Vagina (tissue), 2 donors: ENCODE measurements at regions of chr4 and their contacts with region 1.

Region 1: DNA sequence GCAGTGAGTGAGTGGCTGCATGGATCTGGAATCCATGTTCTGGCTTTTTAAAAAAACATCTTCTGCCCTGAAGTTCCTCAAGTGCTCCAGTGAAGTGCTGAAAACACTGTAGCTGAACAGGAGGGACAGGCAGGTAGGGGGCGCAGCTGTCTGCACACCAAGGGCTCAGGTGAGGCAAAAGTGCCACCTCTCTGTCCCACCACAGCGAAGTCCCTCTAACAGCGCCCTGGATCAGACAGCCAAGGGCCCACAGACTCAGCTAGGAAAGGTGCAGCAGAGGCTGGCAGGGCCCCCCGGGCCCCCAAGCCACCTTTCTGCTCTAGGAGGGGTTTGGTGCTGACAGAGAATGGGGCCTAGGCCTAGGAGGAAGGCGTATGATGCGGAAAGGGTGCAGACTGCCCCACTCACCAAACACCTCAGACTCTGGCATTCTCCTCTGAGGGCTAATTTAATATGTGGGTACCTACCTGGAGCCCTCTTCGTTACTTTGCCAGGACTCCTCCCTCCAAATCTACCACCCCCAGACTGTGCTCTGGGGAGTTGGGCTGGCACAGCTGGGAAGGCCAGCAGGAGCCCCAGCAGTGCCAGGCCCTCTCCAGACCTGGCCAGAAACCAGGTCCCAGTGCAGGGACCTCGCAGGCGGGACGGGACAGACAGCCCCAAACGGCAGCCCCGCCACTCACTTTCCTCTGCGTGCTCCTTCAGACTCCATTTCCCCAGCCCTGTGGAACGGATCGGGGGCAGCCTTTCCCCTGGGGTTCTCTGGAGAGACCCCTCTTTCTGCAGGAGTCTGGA is 73.7 kb downstream of the ENPP6 start:
- DNase-seq: no peak
- H3K4me3 ChIP-seq: no peak overlapping the region
- H3K27ac ChIP-seq: no peak overlapping the region
- H3K4me1 ChIP-seq: peaks cover 7% of the 10 kb centered on the region
- H3K27me3 ChIP-seq: no peaks in the 10 kb centered on the region
- CTCF ChIP-seq: no peak
- POLR2A ChIP-seq: no peak

Region 2: DNA sequence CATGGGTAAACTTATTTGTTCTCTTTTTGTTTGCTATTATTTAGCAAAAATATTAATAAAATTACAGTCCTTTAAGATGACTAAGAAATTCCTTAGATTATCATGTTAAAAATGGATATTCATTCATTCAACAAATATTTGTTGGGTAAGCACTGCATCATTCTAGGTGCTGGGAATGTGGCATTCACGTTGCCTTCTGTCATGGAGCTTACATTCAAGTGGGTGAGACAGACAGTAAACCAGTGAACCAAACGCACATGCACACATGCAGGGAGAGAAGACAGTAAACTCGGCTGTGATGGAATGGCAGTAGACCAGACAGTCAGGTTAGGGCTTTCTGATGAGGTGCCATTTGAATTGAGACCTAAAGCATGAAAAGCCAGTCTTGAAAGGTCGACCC is 147.1 kb before region 1 on chr4:
- intact Hi-C with region 1: loop called (anchors 10 kb)
- DNase-seq: no peak
- H3K4me3 ChIP-seq: no peak overlapping the region
- H3K27ac ChIP-seq: no peak overlapping the region
- H3K4me1 ChIP-seq: no peaks in the 10 kb centered on the region
- H3K27me3 ChIP-seq: no peaks in the 10 kb centered on the region
- CTCF ChIP-seq: no peak
- POLR2A ChIP-seq: no peak

Region 3: GRCh38 chr4:184267673-184268583 is 124.0 kb after region 1 on chr4:
- intact Hi-C with region 1: no loop called
- DNase-seq: peak; percentile 82
- H3K4me3 ChIP-seq: peak overlapping the region in 1 of 2 donors; percentile 34
- H3K27ac ChIP-seq: peak overlapping the region; percentile 47
- H3K4me1 ChIP-seq: no peaks in the 10 kb centered on the region
- H3K27me3 ChIP-seq: no peaks in the 10 kb centered on the region
- CTCF ChIP-seq: no peak
- POLR2A ChIP-seq: no peak

Region 4: DNA sequence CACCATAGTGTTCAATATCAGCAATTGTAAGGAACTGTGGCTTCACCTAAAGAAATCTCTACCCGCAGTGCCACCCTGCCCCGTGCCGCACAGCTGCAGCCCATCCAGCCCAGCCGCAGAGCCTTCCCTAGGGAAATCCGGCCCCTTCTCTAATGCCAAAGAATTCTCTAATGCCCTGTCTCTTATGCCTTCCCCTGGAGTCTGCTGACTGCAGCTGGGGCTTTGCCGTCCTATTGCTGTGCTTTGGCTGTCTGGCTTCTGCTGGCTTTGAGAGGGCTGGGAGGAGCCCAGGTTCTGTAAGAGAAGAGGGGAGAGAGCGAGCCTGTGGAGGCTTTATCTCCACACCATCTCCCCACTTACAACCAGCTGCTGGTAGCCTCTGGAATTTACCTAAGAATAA is 788.4 kb after region 1 on chr4:
- intact Hi-C with region 1: no loop called
- DNase-seq: peak; percentile 54 to 72
- H3K4me3 ChIP-seq: no peak overlapping the region
- H3K27ac ChIP-seq: no peak overlapping the region
- H3K4me1 ChIP-seq: no peaks in the 10 kb centered on the region
- H3K27me3 ChIP-seq: no peaks in the 10 kb centered on the region
- CTCF ChIP-seq: no peak
- POLR2A ChIP-seq: no peak

Region 5: DNA sequence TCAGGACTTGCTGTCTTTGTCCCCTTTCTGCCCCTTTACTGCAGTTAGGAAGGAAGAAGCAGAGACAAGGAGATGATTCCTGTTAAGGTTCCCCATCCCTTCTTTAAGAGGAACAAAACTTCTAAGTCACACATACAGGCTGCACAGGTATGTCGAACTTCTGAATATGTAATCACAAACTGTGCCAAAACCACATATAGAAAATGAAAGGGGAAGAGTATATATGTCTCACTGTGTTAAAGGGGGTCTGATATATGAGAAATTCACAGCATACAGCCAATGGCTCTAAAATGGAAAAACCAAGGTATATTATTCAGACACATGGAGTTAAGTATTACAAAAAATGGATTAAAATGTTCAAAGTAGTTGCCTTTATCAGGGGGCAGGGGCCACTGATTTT is 1048.1 kb after region 1 on chr4:
- intact Hi-C with region 1: no loop called
- DNase-seq: no peak
- H3K4me3 ChIP-seq: no peak overlapping the region
- H3K27ac ChIP-seq: no peak overlapping the region
- H3K4me1 ChIP-seq: peaks cover 6% of the 10 kb centered on the region
- H3K27me3 ChIP-seq: no peaks in the 10 kb centered on the region
- CTCF ChIP-seq: no peak
- POLR2A ChIP-seq: no peak